ENCODE measurements at regions of chr17 and their contacts with region 1.

Region 1: DNA sequence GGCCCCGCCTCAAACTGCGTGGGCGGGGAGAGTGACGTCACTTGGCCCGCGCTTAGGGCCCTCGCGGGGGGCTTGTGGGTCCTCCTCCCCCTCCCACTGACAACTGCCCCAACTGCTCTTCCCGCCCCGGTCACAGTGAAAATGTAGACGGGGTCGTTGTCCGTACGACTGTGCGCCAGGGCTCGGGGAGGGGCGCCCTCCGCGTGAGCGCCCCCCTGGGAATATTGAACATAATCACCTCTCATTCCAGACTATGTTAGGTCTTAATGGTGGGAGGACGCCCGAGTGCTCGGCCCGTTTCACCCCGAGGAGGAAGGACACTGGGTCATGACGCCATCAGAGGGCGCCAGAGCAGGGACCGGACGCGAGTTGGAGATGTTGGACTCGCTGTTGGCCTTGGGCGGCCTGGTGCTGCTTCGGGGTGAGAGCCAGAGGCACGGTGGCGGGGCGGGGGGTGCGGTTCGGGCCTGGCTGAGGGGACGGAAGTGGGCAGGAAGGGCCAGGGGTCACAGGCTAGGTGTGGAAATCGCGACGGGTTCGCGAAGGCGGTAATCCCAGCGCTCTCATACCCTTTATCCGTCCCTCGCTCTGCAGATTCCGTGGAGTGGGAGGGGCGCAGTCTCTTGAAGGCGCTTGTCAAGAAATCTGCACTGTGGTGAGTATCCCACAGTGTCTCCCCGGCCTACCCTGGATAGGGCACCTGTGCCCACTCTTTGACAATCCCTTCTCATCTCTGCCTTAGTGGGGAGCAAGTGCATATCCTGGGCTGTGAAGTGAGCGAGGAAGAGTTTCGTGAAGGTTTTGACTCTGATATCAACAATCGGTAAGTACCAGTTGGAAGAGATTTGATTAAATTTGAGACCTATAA is at the start of gene ELP5:
- DNase-seq: peak; percentile 88 to 96 (median 93)
- H3K4me3 ChIP-seq: peak within 1 kb of the TSS; percentile 73 to 93 (median 87)
- H3K4me3 Mint-ChIP-seq: peak within 1 kb of the TSS; percentile 90 to 95
- H3K27ac ChIP-seq: peak within 1 kb of the TSS; percentile 100
- H3K27ac Mint-ChIP-seq: peak within 1 kb of the TSS; percentile 99 to 100 (median 100)
- H3K4me1 ChIP-seq: peaks cover 31 to 36% of the 10 kb centered on the region in 2 donors
- H3K4me1 Mint-ChIP-seq: peaks cover 34% of the 10 kb centered on the region
- H3K27me3 ChIP-seq: no peaks in the 10 kb centered on the region
- H3K27me3 Mint-ChIP-seq: no peaks in the 10 kb centered on the region
- CTCF ChIP-seq: peak; percentile 28
- polyA plus RNA-seq, gene ELP5: 36.1 to 49.5 (median 44.1) TPM

Region 2: GRCh38 chr17:7204336-7204735 is 48.1 kb before region 1 on chr17:
- intact Hi-C with region 1: no loop called
- DNase-seq: peak in 1 of 3 donors; percentile 15
- H3K4me3 ChIP-seq: peak overlapping the region; percentile 9 to 78 (median 54)
- H3K4me3 Mint-ChIP-seq: peak overlapping the region; percentile 79 to 87
- H3K27ac ChIP-seq: peak overlapping the region; percentile 60 to 79
- H3K27ac Mint-ChIP-seq: peak overlapping the region; percentile 55 to 98 (median 94)
- H3K4me1 ChIP-seq: peaks cover 15 to 17% of the 10 kb centered on the region in 2 donors
- H3K4me1 Mint-ChIP-seq: peaks cover 28% of the 10 kb centered on the region
- H3K27me3 ChIP-seq: no peaks in the 10 kb centered on the region
- H3K27me3 Mint-ChIP-seq: peaks cover 1 to 10% (median 1%) of the 10 kb centered on the region in 3 donors
- CTCF ChIP-seq: no peak

Region 3: GRCh38 chr17:7214300-7215135 is 37.9 kb before region 1 on chr17:
- intact Hi-C with region 1: loop called in 1 of 2 experiments (anchors 5 kb)
- DNase-seq: peak; percentile 91 to 96 (median 92)
- H3K4me3 ChIP-seq: peak overlapping the region; percentile 46 to 83 (median 62)
- H3K4me3 Mint-ChIP-seq: peak overlapping the region; percentile 89 to 90
- H3K27ac ChIP-seq: peak overlapping the region; percentile 69 to 71
- H3K27ac Mint-ChIP-seq: peak overlapping the region; percentile 91 to 100 (median 99)
- H3K4me1 ChIP-seq: peaks cover 56 to 59% of the 10 kb centered on the region in 2 donors
- H3K4me1 Mint-ChIP-seq: peaks cover 66% of the 10 kb centered on the region
- H3K27me3 ChIP-seq: no peaks in the 10 kb centered on the region
- H3K27me3 Mint-ChIP-seq: peaks cover 1 to 11% (median 3%) of the 10 kb centered on the region in 3 donors
- CTCF ChIP-seq: peak; percentile 50

Region 4: DNA sequence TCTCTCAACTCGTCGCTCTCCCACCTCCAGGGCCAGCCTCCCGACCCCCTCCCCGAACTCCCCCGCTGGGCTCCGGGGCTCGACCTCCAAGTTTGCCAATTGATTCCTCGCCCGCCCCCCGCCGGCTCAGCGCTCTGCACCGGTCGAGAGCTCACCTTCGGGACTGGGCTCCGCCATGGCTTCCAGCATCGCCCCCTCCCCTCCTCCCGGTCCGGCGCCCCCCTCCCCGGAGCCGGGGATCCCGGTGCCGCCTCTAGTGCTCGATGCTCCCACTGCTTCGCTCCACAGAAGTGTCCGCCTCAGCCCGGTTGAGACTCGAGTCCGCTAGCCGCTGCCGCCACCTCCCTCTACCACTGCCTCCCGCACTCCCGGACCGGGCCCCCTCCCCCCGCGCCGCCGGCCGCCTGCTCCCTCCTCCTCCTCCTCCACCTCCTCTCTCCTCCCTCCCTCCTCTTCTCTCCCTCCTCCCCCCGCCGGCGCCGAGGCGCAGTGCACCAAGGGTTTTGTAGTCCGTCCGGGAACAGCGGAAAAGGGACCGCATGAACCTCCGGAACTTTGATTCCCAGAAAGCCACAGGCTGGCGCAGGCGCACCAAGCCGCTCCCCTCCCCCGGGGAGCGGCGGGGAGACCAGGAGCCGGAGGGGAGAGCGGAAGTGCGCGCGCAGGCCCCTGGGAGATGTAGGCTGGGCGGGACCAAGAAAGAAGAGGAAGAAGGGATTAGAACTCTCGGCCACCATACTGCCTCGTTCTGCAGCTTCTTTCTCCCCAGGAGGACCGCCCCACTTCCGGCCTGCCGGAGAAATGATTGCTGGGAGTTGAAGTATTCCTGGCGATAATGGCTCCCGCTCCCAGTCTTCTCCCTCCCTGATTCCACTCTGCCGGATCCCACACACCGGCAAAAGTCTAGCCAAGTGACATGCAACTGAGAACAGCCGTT is 13.1 kb before region 1 on chr17 and contains the start of gene PHF23:
- intact Hi-C with region 1: loop called in 1 of 2 experiments (anchors 1 kb)
- DNase-seq: peak; percentile 98 to 99 (median 99)
- H3K4me3 ChIP-seq: peak within 1 kb of the TSS; percentile 95 to 100 (median 98)
- H3K4me3 Mint-ChIP-seq: peak within 1 kb of the TSS; percentile 98 to 99
- H3K27ac ChIP-seq: peak within 1 kb of the TSS; percentile 64 to 100
- H3K27ac Mint-ChIP-seq: peak within 1 kb of the TSS; percentile 99 to 100 (median 100)
- H3K4me1 ChIP-seq: peaks cover 54 to 64% of the 10 kb centered on the region in 2 donors
- H3K4me1 Mint-ChIP-seq: peaks cover 57% of the 10 kb centered on the region
- H3K27me3 ChIP-seq: no peaks in the 10 kb centered on the region
- H3K27me3 Mint-ChIP-seq: peaks cover 0 to 5% (median 0%) of the 10 kb centered on the region in 3 donors
- CTCF ChIP-seq: no peak
- polyA plus RNA-seq, gene PHF23: 12.0 to 18.0 (median 12.9) TPM